Motor neuron (in vitro differentiated cells): ENCODE measurements at regions of chr19 and their contacts with region 1.

Region 1: DNA sequence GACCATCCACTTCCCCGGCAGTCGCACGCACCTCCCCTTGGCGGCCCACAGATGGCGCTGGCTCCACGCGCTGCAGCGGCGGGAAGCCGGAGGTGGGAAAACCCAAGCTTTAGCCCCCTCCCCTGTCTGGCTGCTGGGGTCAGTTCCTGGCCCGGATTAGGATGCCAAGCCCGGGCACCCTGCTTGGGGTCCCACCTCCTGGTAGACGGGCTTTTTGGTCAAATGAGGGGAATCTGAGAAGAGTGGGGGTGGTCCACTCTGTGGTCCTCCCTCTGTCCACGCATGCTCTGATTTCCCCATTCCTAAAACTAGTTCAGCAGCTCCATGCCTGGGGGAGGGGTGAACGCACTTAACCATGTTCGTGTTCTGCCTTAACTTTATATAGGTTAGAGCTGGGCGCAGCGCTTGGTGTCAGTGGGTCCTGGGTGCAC is 8.1 kb upstream of the ADGRE2 start:
- ATAC-seq: peak in 3 of 8 experiments; percentile 29 to 80 (median 29)
- H3K4me3 ChIP-seq: no peak overlapping the region
- H3K27ac ChIP-seq: no peak overlapping the region
- H3K4me1 ChIP-seq: no peaks in the 10 kb centered on the region

Region 2: GRCh38 chr19:14890643-14891379 is 104.4 kb after region 1 on chr19:
- in situ Hi-C with region 1: loop called in 1 of 9 experiments (anchors 10 kb)
- ATAC-seq: no peak
- H3K4me3 ChIP-seq: no peak overlapping the region
- H3K27ac ChIP-seq: no peak overlapping the region
- H3K4me1 ChIP-seq: peaks cover 0 to 6% of the 10 kb centered on the region in 2 donors